CD4-positive, alpha-beta T cell (primary cell): ENCODE measurements at regions of chr14 and their contacts with region 1.

Region 1: GRCh38 chr14:83632375-83632774 is 1897.6 kb upstream of the FLRT2 start:
- DNase-seq: no peak
- ATAC-seq: no peak
- H3K4me3 ChIP-seq: no peak overlapping the region
- H3K4me3 Mint-ChIP-seq: no peak overlapping the region
- H3K27ac ChIP-seq: no peak overlapping the region
- H3K27ac Mint-ChIP-seq: no peak overlapping the region
- H3K4me1 ChIP-seq: no peaks in the 10 kb centered on the region
- H3K4me1 Mint-ChIP-seq: no peaks in the 10 kb centered on the region
- H3K27me3 ChIP-seq: no peaks in the 10 kb centered on the region
- H3K27me3 Mint-ChIP-seq: no peaks in the 10 kb centered on the region
- CTCF ChIP-seq: no peak

Region 2: DNA sequence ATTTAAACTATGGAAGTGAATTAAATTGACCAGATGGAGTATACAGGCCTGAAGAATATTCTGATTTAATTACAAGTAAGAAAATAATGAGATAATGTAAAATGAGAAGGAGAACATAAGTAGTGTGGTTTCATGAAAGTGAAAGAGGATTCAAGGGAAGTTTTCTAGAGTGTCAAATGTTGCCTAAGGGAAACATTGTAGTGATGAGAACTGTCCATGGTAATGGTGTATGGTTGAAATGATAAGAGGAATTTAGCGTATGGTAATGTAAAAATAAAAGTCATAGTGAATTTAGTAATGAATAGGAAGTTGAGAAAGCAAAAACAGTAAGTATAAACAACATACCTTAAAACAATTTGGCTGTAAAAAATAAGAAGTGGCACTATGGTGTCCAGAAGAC is 57.1 kb before region 1 on chr14:
- CTCF ChIA-PET with region 1: no interaction called
- POLR2A ChIA-PET with region 1: no interaction called
- intact Hi-C with region 1: loop called in 1 of 2 experiments (anchors 10 kb)
- DNase-seq: no peak
- ATAC-seq: no peak
- H3K4me3 ChIP-seq: no peak overlapping the region
- H3K4me3 Mint-ChIP-seq: no peak overlapping the region
- H3K27ac ChIP-seq: no peak overlapping the region
- H3K27ac Mint-ChIP-seq: no peak overlapping the region
- H3K4me1 ChIP-seq: no peaks in the 10 kb centered on the region
- H3K4me1 Mint-ChIP-seq: no peaks in the 10 kb centered on the region
- H3K27me3 ChIP-seq: no peaks in the 10 kb centered on the region
- H3K27me3 Mint-ChIP-seq: no peaks in the 10 kb centered on the region
- CTCF ChIP-seq: no peak

Region 3: GRCh38 chr14:84477996-84478395 is 845.6 kb after region 1 on chr14:
- CTCF ChIA-PET with region 1: no interaction called
- POLR2A ChIA-PET with region 1: no interaction called
- intact Hi-C with region 1: no loop called
- DNase-seq: no peak
- ATAC-seq: no peak
- H3K4me3 ChIP-seq: no peak overlapping the region
- H3K4me3 Mint-ChIP-seq: no peak overlapping the region
- H3K27ac ChIP-seq: no peak overlapping the region
- H3K27ac Mint-ChIP-seq: no peak overlapping the region
- H3K4me1 ChIP-seq: no peaks in the 10 kb centered on the region
- H3K4me1 Mint-ChIP-seq: no peaks in the 10 kb centered on the region
- H3K27me3 ChIP-seq: no peaks in the 10 kb centered on the region
- H3K27me3 Mint-ChIP-seq: no peaks in the 10 kb centered on the region
- CTCF ChIP-seq: no peak

Region 4: GRCh38 chr14:84708865-84709264 is 1076.5 kb after region 1 on chr14:
- CTCF ChIA-PET with region 1: no interaction called
- POLR2A ChIA-PET with region 1: no interaction called
- intact Hi-C with region 1: no loop called
- DNase-seq: no peak
- ATAC-seq: no peak
- H3K4me3 ChIP-seq: no peak overlapping the region
- H3K4me3 Mint-ChIP-seq: no peak overlapping the region
- H3K27ac ChIP-seq: no peak overlapping the region
- H3K27ac Mint-ChIP-seq: no peak overlapping the region
- H3K4me1 ChIP-seq: no peaks in the 10 kb centered on the region
- H3K4me1 Mint-ChIP-seq: no peaks in the 10 kb centered on the region
- H3K27me3 ChIP-seq: no peaks in the 10 kb centered on the region
- H3K27me3 Mint-ChIP-seq: no peaks in the 10 kb centered on the region
- CTCF ChIP-seq: no peak

Region 5: GRCh38 chr14:84857571-84857970 is 1225.2 kb after region 1 on chr14:
- CTCF ChIA-PET with region 1: no interaction called
- POLR2A ChIA-PET with region 1: no interaction called
- intact Hi-C with region 1: no loop called
- DNase-seq: no peak
- ATAC-seq: no peak
- H3K4me3 ChIP-seq: no peak overlapping the region
- H3K4me3 Mint-ChIP-seq: no peak overlapping the region
- H3K27ac ChIP-seq: no peak overlapping the region
- H3K27ac Mint-ChIP-seq: no peak overlapping the region
- H3K4me1 ChIP-seq: no peaks in the 10 kb centered on the region
- H3K4me1 Mint-ChIP-seq: no peaks in the 10 kb centered on the region
- H3K27me3 ChIP-seq: no peaks in the 10 kb centered on the region
- H3K27me3 Mint-ChIP-seq: no peaks in the 10 kb centered on the region
- CTCF ChIP-seq: no peak